ENCODE measurements at regions of chr12 and their contacts with region 1.

Region 1: GRCh38 chr12:105053116-105053572 is 31.1 kb downstream of the ALDH1L2 start:
- DNase-seq: peak in 4 of 5 donors; percentile 38 to 62 (median 50)
- ATAC-seq: peak in 3 of 4 donors; percentile 57 to 77 (median 68)
- H3K4me3 ChIP-seq: no peak overlapping the region
- H3K27ac ChIP-seq: no peak overlapping the region
- H3K4me1 ChIP-seq: no peaks in the 10 kb centered on the region
- H3K27me3 ChIP-seq: no peaks in the 10 kb centered on the region
- CTCF ChIP-seq: peak; percentile 87 to 98 (median 91)
- POLR2A ChIP-seq: no peak

Region 2: DNA sequence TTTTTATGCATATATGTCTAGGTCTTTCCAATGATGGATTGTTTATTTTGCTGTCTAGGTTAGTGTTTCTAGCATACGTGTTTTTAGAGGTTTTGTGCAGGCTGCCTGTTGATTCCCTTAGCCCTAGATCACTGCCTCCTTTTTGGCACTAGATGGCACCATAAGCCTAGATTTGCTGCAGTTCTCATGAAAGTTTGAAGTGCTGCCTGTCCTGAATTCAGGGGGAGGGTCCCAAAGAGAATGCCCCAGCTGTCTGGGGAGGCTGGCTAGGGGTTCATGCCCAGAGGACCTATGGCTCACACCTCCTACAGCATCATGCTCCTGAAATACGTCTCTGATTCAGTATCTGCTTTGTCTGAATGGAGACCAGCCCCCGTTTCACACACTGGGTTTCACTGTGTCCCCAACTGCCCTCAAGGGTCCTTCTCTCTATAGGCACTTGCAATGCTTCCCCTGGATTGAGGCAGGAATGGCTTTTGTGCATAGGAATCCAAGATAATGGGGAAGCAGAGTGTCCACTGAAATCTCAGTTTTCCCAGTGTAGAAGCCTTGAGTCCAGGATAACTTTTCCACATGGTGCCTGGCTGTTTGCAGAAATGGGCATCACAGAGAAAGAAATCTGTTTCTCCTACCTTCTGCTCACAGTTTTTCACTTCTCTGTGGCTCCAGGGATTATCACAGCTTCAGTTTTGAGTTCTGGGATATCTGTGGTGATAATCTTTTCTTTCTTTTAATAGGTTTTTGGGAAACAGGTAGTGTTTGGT is 851.7 kb before region 1 on chr12:
- intact Hi-C with region 1: loop called in 4 of 10 experiments (anchors 5 to 10 kb)
- DNase-seq: peak in 1 of 5 donors; percentile 14
- ATAC-seq: peak in 3 of 4 donors; percentile 72 to 86 (median 72)
- H3K4me3 ChIP-seq: no peak overlapping the region
- H3K27ac ChIP-seq: no peak overlapping the region
- H3K4me1 ChIP-seq: peaks cover 0 to 6% (median 0%) of the 10 kb centered on the region in 12 donors
- H3K27me3 ChIP-seq: no peaks in the 10 kb centered on the region
- CTCF ChIP-seq: peak; percentile 58 to 92 (median 82)
- POLR2A ChIP-seq: no peak

Region 3: GRCh38 chr12:104381731-104382480 is 671.2 kb before region 1 on chr12:
- intact Hi-C with region 1: loop called (anchors 2 to 10 kb)
- DNase-seq: peak; percentile 52 to 77 (median 73)
- ATAC-seq: peak in 3 of 4 donors; percentile 86 to 93 (median 91)
- H3K4me3 ChIP-seq: no peak overlapping the region
- H3K27ac ChIP-seq: no peak overlapping the region
- H3K4me1 ChIP-seq: peaks cover 0 to 10% (median 4%) of the 10 kb centered on the region in 12 donors
- H3K27me3 ChIP-seq: no peaks in the 10 kb centered on the region
- CTCF ChIP-seq: peak; percentile 90 to 99 (median 94)
- POLR2A ChIP-seq: no peak

Region 4: DNA sequence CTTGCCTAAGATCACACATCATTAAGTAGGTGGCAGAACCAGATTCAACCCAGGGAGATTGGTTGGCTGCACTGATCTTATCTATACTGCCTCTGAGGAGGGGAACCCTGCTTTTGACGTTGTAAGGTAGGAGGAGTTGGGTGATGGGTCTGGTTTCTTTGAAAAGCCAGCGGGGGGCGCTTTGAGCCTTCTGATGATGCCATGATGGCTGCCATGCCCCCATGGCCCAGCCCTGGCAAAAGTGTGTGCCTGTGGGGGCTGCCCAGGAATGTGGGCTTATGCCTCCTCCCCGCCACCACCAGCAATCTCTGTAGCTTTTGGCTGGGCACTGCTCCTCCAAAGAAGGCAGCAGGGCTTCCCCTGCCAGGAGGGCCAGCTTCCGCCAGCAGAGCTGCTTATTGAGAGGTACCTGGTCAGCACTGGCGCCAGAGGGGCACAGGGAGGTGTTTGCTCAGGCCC is 319.4 kb before region 1 on chr12:
- intact Hi-C with region 1: loop called in 1 of 10 experiments (anchors 10 kb)
- DNase-seq: no peak
- ATAC-seq: peak in 3 of 4 donors; percentile 40 to 50 (median 42)
- H3K4me3 ChIP-seq: no peak overlapping the region
- H3K27ac ChIP-seq: no peak overlapping the region
- H3K4me1 ChIP-seq: peaks cover 0 to 24% (median 0%) of the 10 kb centered on the region in 12 donors
- H3K27me3 ChIP-seq: no peaks in the 10 kb centered on the region
- CTCF ChIP-seq: peak in 5 of 12 donors; percentile 21 to 31 (median 27)
- POLR2A ChIP-seq: no peak

Region 5: DNA sequence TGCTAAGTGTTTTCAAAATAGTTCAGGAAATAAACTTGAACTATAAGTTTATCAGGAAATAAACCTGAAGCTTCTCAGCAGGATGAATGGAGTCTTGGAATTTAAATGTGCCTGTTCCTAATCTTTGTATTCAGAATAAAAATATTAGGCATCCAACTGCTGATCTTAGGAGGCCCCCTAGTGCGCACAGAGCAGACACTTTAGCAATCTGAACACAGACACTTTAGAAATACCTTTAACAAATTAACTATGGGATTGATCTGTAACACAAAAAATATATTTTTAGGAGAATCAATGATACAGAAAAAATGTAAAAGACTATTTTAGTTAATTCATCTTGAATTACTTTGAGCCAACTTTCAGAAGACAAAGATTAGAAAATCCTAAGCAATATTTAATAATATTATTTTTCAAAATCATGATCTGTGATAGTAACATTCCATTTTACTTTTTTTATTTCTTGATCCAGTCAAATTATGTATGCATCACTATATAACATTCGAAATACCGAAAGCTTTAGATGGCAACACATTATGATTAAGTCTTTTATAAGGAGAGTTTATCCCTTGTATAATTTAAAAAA is 175.9 kb before region 1 on chr12:
- intact Hi-C with region 1: loop called in 2 of 10 experiments (anchors 5 kb)
- DNase-seq: peak in 3 of 5 donors; percentile 27 to 55 (median 33)
- ATAC-seq: peak in 3 of 4 donors; percentile 67 to 77 (median 76)
- H3K4me3 ChIP-seq: no peak overlapping the region
- H3K27ac ChIP-seq: no peak overlapping the region
- H3K4me1 ChIP-seq: peaks cover 0 to 3% (median 0%) of the 10 kb centered on the region in 12 donors
- H3K27me3 ChIP-seq: no peaks in the 10 kb centered on the region
- CTCF ChIP-seq: peak; percentile 37 to 85 (median 76)
- POLR2A ChIP-seq: no peak

Region 6: GRCh38 chr12:105092336-105092735 is 39.2 kb after region 1 on chr12:
- intact Hi-C with region 1: no loop called
- DNase-seq: no peak
- ATAC-seq: no peak
- H3K4me3 ChIP-seq: no peak overlapping the region
- H3K27ac ChIP-seq: no peak overlapping the region
- H3K4me1 ChIP-seq: no peaks in the 10 kb centered on the region
- H3K27me3 ChIP-seq: no peaks in the 10 kb centered on the region
- CTCF ChIP-seq: no peak
- POLR2A ChIP-seq: no peak